MCF 10A (cell line): ENCODE measurements at regions of chr20 and their contacts with region 1.

Region 1: DNA sequence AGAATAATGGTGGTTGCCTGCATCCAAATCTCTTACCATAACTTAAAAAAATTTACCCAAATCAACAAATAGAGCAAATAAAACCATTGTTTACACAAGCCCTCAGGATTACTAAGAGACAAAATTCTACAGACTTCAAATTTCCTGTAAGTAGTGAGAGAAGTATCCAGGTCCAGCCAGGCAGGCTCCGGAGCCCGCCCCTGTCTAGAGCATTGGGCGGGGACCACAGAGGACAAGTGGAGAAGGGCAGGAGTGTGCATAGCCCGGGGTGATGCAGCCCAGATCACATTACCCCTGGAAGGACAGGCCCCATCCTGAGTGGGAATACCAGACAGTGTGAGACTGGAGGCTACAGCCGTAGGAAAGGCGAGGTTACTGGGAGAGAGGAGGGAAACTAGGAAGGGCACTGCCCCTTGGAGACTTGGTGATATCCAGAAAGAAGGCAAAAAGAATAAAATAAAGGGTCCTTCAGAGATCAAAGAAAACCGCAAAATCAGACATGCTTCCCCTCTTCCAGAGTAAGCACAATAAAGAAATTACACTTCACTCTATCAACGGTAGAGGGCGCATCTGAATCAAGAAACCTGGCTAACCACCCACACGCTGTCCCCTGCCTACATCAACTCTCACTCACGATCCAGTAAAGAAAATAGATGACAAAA is 26.6 kb downstream of the RIN2 start:
- DNase-seq: peak; percentile 89
- H3K4me3 Mint-ChIP-seq: peak overlapping the region; percentile 51
- H3K27ac Mint-ChIP-seq: peak overlapping the region; percentile 86
- H3K4me1 Mint-ChIP-seq: peaks cover 60% of the 10 kb centered on the region
- H3K27me3 Mint-ChIP-seq: no peaks in the 10 kb centered on the region
- CTCF ChIP-seq: peak; percentile 68

Region 2: GRCh38 chr20:19692685-19693119 is 91.9 kb before region 1 on chr20:
- CTCF ChIA-PET with region 1: interaction called, 39 read pairs
- POLR2A ChIA-PET with region 1: interaction called, 9 read pairs
- intact Hi-C with region 1: loop called (anchors 1 kb)
- DNase-seq: peak; percentile 58
- H3K4me3 Mint-ChIP-seq: no peak overlapping the region
- H3K27ac Mint-ChIP-seq: peak overlapping the region; percentile 39
- H3K4me1 Mint-ChIP-seq: peaks cover 23% of the 10 kb centered on the region
- H3K27me3 Mint-ChIP-seq: no peaks in the 10 kb centered on the region
- CTCF ChIP-seq: peak; percentile 92

Region 3: GRCh38 chr20:19712721-19713260 is 71.9 kb before region 1 on chr20:
- CTCF ChIA-PET with region 1: no interaction called
- POLR2A ChIA-PET with region 1: no interaction called
- intact Hi-C with region 1: no loop called
- DNase-seq: no peak
- H3K4me3 Mint-ChIP-seq: no peak overlapping the region
- H3K27ac Mint-ChIP-seq: no peak overlapping the region
- H3K4me1 Mint-ChIP-seq: no peaks in the 10 kb centered on the region
- H3K27me3 Mint-ChIP-seq: no peaks in the 10 kb centered on the region
- CTCF ChIP-seq: no peak

Region 4: GRCh38 chr20:19774135-19774933 is 10.3 kb before region 1 on chr20:
- CTCF ChIA-PET with region 1: interaction called, 46 read pairs
- POLR2A ChIA-PET with region 1: interaction called, 4 read pairs
- intact Hi-C with region 1: no loop called
- DNase-seq: no peak
- H3K4me3 Mint-ChIP-seq: no peak overlapping the region
- H3K27ac Mint-ChIP-seq: no peak overlapping the region
- H3K4me1 Mint-ChIP-seq: peaks cover 6% of the 10 kb centered on the region
- H3K27me3 Mint-ChIP-seq: no peaks in the 10 kb centered on the region
- CTCF ChIP-seq: no peak

Region 5: DNA sequence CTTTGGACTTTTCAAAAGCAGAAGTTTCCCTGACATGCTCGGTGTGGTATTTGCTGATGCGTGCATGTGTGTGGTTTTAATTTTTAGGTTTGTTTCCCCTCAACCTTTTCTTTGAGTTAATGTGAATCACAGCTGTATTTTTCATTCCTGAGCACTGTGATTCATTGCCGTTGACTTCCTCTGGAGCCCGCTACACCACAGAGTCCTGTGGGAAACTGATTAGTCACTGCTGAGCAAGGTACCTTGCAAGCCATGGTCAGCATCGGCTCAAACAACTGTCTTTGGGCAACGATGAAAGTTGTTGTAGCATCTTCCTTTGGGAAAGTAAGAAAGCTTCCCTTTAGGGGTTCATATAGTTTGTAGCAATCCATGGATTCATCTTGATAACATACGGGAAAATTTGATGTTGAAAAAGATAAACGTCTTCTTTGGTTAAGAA is 30.9 kb after region 1 on chr20:
- CTCF ChIA-PET with region 1: interaction called, 11 read pairs
- POLR2A ChIA-PET with region 1: interaction called, 14 read pairs
- intact Hi-C with region 1: no loop called
- DNase-seq: peak; percentile 95
- H3K4me3 Mint-ChIP-seq: peak overlapping the region; percentile 44
- H3K27ac Mint-ChIP-seq: peak overlapping the region; percentile 90
- H3K4me1 Mint-ChIP-seq: peaks cover 20% of the 10 kb centered on the region
- H3K27me3 Mint-ChIP-seq: no peaks in the 10 kb centered on the region
- CTCF ChIP-seq: no peak

Region 6: GRCh38 chr20:19889011-19889953 is 104.6 kb after region 1 on chr20:
- CTCF ChIA-PET with region 1: interaction called, 48 read pairs
- POLR2A ChIA-PET with region 1: interaction called, 32 read pairs
- intact Hi-C with region 1: loop called (anchors 1 kb)
- DNase-seq: peak; percentile 48
- H3K4me3 Mint-ChIP-seq: peak overlapping the region; percentile 60
- H3K27ac Mint-ChIP-seq: peak overlapping the region; percentile 94
- H3K4me1 Mint-ChIP-seq: peaks cover 48% of the 10 kb centered on the region
- H3K27me3 Mint-ChIP-seq: no peaks in the 10 kb centered on the region
- CTCF ChIP-seq: no peak

Region 7: DNA sequence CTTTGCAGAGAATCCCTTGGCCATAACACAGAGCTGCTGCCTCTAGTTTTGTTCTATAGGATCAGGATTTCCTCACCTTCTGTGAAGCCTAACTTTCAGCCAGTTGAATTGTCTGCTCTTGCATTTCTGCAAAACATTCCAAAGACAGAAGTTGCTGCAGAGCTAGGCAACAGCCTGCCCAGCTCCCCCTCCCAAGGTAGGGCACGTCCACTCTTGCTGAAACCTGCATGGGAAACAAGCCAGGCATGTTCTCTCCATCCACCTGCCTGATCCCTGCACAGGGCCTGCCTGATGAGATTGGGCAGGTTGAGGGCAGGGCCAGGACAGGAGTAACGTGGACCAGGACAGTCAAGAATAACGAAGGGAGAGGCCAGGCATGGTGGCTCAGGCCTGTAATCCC is 173.6 kb after region 1 on chr20:
- CTCF ChIA-PET with region 1: interaction called, 6 read pairs
- POLR2A ChIA-PET with region 1: interaction called, 16 read pairs
- intact Hi-C with region 1: no loop called
- DNase-seq: peak; percentile 67
- H3K4me3 Mint-ChIP-seq: no peak overlapping the region
- H3K27ac Mint-ChIP-seq: peak overlapping the region; percentile 61
- H3K4me1 Mint-ChIP-seq: peaks cover 6% of the 10 kb centered on the region
- H3K27me3 Mint-ChIP-seq: no peaks in the 10 kb centered on the region
- CTCF ChIP-seq: no peak

Region 8: GRCh38 chr20:19995220-19995863 is 210.7 kb after region 1 on chr20:
- CTCF ChIA-PET with region 1: interaction called, 181 read pairs
- POLR2A ChIA-PET with region 1: interaction called, 92 read pairs
- intact Hi-C with region 1: loop called (anchors 1 kb)
- DNase-seq: peak; percentile 70
- H3K4me3 Mint-ChIP-seq: no peak overlapping the region
- H3K27ac Mint-ChIP-seq: peak overlapping the region; percentile 86
- H3K4me1 Mint-ChIP-seq: peaks cover 28% of the 10 kb centered on the region
- H3K27me3 Mint-ChIP-seq: no peaks in the 10 kb centered on the region
- CTCF ChIP-seq: peak; percentile 78